SK-N-SH (cell line): ENCODE measurements at regions of chr19 and their contacts with region 1.

Region 1: DNA sequence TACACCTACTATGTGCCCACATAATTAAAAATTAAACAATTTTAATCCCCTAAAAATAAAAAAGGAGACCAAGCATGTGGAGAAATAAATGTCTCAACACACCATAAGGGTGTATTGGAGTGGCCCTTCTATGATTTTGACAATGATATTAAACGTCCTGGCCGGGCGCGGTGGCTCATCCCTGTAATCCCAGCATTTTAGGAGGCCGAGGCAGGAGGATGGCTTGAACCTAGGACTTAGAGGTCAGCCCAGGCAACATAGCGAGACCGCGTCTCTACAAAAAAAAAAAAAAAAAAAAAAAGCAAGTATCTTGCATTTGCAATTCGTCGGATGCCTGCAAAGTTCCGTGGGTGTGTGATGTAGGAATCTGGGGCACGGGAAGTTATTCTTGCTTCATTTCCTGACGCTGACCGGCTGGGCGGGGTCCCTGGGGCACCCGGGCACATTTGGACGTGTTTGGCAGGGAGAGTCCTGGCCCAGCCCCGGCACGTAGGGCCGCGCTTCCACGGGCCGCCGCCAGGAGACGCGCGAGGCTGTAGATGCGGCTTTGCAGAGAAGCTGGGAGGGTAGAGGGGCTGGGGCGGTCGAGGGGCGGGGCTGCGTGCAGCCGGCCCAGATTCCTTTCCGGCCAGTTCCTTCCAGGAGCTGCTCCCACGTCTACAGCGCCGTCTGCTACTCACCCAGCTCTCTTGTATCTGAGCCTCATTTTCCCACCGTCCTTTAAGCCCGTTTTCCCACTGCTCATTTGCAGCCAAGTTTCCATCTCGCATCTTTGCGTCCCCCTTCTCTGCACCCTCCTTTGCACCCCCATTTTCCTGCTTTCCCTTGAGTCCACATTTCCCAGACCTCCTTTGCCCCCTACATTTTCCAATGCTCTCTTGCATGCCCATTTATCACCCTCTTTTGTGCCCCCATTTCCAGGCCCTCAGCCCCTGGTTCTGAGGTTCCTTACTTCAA is 2.2 kb upstream of the TSPAN16 start:
- DNase-seq: peak; percentile 96
- H3K4me3 ChIP-seq: peak overlapping the region; percentile 24 to 55; a peak in 3 of 4 replicates
- H3K27ac ChIP-seq: peak overlapping the region; percentile 44 to 75; a peak in 3 of 4 replicates
- H3K4me1 ChIP-seq: peaks cover 0 to 3% of the 10 kb centered on the region in 2 experiments; a peak in 1 of 4 replicates
- H3K27me3 ChIP-seq: no peaks in the 10 kb centered on the region
- CTCF ChIP-seq: peak; percentile 98
- EP300 ChIP-seq: no peak
- RAD21 ChIP-seq: peak; percentile 93

Region 2: DNA sequence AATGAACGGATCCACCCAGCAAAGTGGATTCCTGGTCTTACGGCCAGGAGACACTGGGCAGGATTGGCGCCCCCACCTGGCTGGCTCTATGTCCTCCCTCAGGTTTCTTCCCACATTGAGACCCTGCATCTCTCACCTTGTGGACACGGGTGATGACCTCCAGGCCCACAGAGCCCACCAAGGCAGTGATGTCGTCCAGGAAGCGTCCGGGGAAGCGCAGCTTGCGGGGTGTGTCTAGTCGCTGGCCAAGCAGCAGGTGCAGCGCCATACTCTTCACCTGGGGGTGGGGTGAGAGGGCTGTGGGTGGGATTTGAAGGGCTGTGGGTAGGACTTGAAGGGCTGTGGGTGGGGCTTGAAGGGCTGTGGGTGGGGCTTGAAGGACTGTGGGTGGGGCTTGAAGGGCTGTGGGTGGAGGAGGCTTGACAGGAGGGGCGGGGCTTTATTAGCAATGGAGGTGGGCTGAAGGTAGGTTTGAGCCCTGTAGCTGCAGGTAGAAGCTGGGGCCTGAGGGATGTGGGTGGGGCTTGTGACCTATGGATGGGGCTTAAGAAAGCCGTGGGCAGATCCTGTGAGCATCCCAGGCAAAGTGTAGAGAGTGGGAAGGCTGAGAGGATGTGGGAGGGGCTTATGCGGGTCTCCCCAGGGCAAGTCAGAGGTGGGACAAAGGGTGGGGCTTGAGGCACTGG is 66.4 kb before region 1 on chr19:
- CTCF ChIA-PET with region 1: no interaction called
- POLR2A ChIA-PET with region 1: no interaction called
- DNase-seq: peak; percentile 73
- H3K4me3 ChIP-seq: no peak overlapping the region
- H3K27ac ChIP-seq: no peak overlapping the region
- H3K4me1 ChIP-seq: no peaks in the 10 kb centered on the region
- H3K27me3 ChIP-seq: no peaks in the 10 kb centered on the region
- CTCF ChIP-seq: peak; percentile 33; the same call in 1 of the 2 replicates
- EP300 ChIP-seq: no peak
- RAD21 ChIP-seq: no peak

Region 3: DNA sequence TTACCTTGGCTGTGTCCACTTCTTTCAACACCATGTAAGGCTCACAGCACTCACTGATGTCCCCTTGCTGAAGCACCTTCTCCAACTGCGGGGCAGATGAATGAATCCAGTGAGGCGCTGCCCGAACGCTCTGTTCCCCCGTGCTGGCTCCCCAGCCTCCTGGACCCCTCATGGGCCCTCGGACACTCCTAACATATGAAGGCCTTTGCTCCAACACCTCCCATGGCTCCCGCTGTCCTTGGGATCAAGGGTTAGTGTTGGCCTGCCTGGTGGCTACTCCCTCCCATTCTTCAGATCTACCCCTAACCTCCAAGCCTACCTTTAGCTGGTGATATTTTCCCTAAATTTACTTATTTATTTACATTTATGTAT is 49.9 kb before region 1 on chr19:
- CTCF ChIA-PET with region 1: no interaction called
- POLR2A ChIA-PET with region 1: no interaction called
- DNase-seq: no peak
- H3K4me3 ChIP-seq: no peak overlapping the region; a peak in 1 of 4 replicates
- H3K27ac ChIP-seq: no peak overlapping the region
- H3K4me1 ChIP-seq: peaks cover 0 to 4% of the 10 kb centered on the region in 2 experiments; a peak in 1 of 4 replicates
- H3K27me3 ChIP-seq: no peaks in the 10 kb centered on the region
- CTCF ChIP-seq: no peak
- EP300 ChIP-seq: no peak
- RAD21 ChIP-seq: no peak

Region 4: DNA sequence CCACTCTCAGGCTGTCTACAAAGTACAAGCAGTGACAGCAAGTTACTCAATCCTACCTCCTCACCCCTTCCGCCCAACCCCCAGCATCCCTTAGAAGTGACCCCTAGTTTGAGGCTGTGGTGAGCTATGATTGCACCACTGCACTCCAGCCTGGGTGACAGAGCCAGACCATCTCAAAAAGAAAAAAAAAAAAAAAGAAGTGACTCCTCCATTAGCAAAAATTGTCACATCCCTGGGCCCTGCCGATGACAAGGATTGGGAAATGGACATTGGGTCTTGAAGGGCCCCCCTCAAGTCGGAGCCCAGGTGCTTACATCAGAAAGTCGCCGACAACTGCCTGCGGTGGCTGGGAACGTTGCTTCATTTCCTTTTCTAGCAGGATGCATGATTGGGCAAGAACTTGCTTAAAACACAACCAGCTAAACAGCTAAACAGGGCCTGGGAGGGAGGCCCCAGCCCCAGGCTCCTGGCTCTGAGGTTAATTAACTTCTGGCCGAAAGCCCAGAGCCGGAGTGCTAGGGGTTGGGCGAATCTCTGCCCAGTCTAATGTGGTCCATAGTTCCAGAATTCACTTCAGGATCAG is 30.5 kb after region 1 on chr19:
- CTCF ChIA-PET with region 1: interaction called, 10 read pairs
- POLR2A ChIA-PET with region 1: no interaction called
- DNase-seq: peak; percentile 91
- H3K4me3 ChIP-seq: 0 out of 4 replicates have a peak overlapping the region, but pooled peaks of 1 of the 2 experiments have one; percentile 1
- H3K27ac ChIP-seq: peak overlapping the region; percentile 65 to 87
- H3K4me1 ChIP-seq: peaks cover 9 to 19% of the 10 kb centered on the region in 2 experiments
- H3K27me3 ChIP-seq: no peaks in the 10 kb centered on the region
- CTCF ChIP-seq: no peak
- EP300 ChIP-seq: peak; percentile 31 to 54; a peak in 3 of 4 replicates
- RAD21 ChIP-seq: peak; percentile 37

Region 5: GRCh38 chr19:11346092-11346940 is 52.6 kb after region 1 on chr19 and contains the starts of genes CCDC159 and TMEM205:
- CTCF ChIA-PET with region 1: interaction called, 23 read pairs
- POLR2A ChIA-PET with region 1: interaction called, 3 read pairs
- DNase-seq: peak; percentile 95
- H3K4me3 ChIP-seq: peak within 1 kb of the TSS; percentile 74 to 96
- H3K27ac ChIP-seq: peak within 1 kb of the TSS; percentile 58 to 74
- H3K4me1 ChIP-seq: peaks cover 13 to 14% of the 10 kb centered on the region in 2 experiments; a peak in 2 of 4 replicates
- H3K27me3 ChIP-seq: no peaks in the 10 kb centered on the region
- CTCF ChIP-seq: peak; percentile 28; the same call in 1 of the 2 replicates
- EP300 ChIP-seq: no peak
- RAD21 ChIP-seq: no peak
- polyA plus RNA-seq, gene CCDC159: 25.2 and 30.1 TPM in 2 replicates
- polyA plus RNA-seq, gene TMEM205: 209 and 219 TPM in 2 replicates

Region 6: DNA sequence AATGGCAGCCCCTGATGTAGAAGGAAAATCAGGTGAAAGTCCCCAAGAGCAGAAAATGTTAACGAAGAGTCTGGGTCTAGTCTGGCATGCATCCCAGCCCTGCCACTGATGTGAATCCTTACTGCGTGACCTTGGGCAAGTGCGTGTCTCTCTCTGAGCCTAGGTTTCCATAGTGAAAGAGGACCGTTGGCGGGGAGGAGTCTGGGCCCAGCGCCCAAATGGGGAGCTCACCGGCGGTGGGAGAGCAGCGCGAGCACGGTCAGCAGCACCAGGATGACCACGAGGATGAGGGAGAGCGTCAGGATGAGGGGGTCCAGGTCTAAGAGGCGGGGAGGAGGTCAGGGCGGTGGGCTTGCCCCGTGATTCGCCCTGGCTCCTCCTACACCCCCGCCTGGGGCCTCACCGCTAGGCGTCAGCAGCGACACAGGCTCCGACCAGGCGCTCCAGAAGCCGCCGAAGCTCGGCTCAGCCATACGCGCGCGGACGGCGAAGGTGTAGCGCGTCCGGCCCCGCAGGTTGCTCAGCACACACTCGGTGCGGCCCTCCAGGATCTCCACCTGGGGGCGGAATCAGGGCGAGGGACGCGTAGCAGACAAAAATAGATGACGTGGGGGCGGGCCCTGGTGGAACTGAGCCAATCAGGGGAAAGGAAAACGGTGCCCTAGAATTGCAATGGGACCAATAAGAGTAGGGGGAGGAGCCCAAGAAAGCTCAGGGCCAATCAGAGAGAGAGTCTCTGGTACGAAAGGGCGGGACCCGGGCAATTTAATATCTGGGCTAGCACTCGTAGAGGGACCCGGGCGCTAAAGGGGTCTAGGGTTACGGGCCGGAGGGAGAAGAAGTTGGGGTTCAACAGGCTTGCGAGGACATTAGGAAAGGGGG is 87.2 kb after region 1 on chr19:
- CTCF ChIA-PET with region 1: interaction called, 66 read pairs
- POLR2A ChIA-PET with region 1: interaction called, 6 read pairs
- DNase-seq: peak; percentile 95
- H3K4me3 ChIP-seq: peak overlapping the region; percentile 61 to 70
- H3K27ac ChIP-seq: peak overlapping the region; percentile 51 to 73
- H3K4me1 ChIP-seq: peaks cover 16 to 19% of the 10 kb centered on the region in 2 experiments; a peak in 3 of 4 replicates
- H3K27me3 ChIP-seq: no peaks in the 10 kb centered on the region
- CTCF ChIP-seq: peak; percentile 72
- EP300 ChIP-seq: no peak
- RAD21 ChIP-seq: peak; percentile 42

Region 7: DNA sequence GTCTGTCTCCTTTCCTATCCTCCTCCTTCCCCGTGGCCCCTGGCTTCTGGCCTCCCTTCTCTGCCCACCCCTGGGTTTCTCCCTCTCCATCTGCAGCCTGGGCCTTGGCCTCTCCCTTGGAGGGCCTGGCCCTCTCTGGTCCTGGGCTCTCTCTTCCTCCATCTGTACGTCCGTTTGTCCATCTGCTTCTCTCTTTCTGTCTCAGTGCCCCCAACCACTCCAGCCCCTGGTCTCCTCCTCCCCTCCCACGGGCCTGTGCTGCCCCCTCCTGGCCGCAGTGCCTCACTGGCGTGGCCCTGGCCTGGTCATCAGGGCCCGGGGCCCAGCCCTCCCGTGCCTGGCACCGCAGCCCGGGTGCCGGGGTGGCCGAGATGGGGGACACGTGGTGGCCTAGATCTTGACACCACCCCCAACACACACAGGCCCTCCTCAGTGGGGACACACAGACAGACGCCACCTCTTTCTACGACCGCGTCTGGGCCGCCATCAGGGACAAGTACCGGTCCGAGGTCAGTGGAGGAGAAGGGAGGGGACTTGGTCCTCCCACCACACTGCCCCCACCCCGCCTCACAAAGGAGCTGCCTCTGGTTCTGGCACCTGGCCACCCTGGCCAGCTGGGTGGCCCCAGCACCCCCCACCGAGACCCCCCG is 153.1 kb after region 1 on chr19:
- CTCF ChIA-PET with region 1: interaction called, 14 read pairs
- POLR2A ChIA-PET with region 1: no interaction called
- DNase-seq: peak; percentile 97
- H3K4me3 ChIP-seq: no peak overlapping the region; a peak in 1 of 4 replicates
- H3K27ac ChIP-seq: no peak overlapping the region
- H3K4me1 ChIP-seq: no peaks in the 10 kb centered on the region
- H3K27me3 ChIP-seq: no peaks in the 10 kb centered on the region
- CTCF ChIP-seq: peak; percentile 85
- EP300 ChIP-seq: no peak
- RAD21 ChIP-seq: peak; percentile 81